ENCODE measurements at regions of chr9 and their contacts with region 1.

Region 1: GRCh38 chr9:6305954-6306563 is 22.1 kb upstream of the TPD52L3 start:
- DNase-seq: no peak
- ATAC-seq: peak in 1 of 4 donors; percentile 67
- H3K4me3 ChIP-seq: no peak overlapping the region
- H3K27ac ChIP-seq: no peak overlapping the region
- H3K4me1 ChIP-seq: no peaks in the 10 kb centered on the region
- H3K27me3 ChIP-seq: peaks cover 0 to 4% (median 0%) of the 10 kb centered on the region in 3 donors
- CTCF ChIP-seq: peak; percentile 52

Region 2: DNA sequence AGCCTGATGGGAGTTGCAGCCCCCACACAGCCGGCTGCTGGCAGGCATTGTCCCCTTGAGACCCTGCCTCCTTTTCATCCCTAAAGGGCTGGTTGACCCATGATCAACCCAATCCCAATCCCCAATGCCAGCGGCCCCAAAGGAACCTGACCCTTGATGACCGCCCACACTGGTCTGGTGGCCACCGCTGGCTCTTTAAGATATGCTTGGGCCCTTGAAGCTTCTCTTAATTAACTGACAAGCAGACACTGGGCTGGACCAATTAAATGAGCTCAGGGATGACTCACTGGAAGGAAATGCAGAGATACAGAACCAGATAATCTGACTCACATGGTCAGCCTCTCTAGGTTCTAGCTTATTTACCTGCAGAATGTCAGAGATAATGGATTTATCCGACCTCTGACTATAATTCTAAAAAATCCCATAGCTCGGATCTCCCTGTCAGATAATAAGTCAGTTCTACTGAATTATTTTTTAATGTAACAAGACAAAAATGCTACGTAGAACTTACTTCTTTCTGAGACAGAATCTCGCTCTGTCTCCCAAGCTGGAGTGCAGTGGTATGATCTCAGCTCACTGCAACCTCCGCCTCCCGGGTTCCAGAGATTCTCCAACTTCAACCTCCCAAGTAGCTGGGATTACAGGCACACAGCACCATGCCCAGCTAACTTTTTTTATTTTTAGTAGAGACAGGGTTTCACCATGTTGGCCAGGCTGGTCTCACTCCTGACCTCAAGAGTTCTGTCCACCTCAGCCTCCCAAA is 426.5 kb before region 1 on chr9:
- intact Hi-C with region 1: loop called (anchors 5 to 10 kb)
- DNase-seq: no peak
- ATAC-seq: peak in 1 of 4 donors; percentile 29
- H3K4me3 ChIP-seq: no peak overlapping the region
- H3K27ac ChIP-seq: no peak overlapping the region
- H3K4me1 ChIP-seq: no peaks in the 10 kb centered on the region
- H3K27me3 ChIP-seq: no peaks in the 10 kb centered on the region
- CTCF ChIP-seq: no peak

Region 3: DNA sequence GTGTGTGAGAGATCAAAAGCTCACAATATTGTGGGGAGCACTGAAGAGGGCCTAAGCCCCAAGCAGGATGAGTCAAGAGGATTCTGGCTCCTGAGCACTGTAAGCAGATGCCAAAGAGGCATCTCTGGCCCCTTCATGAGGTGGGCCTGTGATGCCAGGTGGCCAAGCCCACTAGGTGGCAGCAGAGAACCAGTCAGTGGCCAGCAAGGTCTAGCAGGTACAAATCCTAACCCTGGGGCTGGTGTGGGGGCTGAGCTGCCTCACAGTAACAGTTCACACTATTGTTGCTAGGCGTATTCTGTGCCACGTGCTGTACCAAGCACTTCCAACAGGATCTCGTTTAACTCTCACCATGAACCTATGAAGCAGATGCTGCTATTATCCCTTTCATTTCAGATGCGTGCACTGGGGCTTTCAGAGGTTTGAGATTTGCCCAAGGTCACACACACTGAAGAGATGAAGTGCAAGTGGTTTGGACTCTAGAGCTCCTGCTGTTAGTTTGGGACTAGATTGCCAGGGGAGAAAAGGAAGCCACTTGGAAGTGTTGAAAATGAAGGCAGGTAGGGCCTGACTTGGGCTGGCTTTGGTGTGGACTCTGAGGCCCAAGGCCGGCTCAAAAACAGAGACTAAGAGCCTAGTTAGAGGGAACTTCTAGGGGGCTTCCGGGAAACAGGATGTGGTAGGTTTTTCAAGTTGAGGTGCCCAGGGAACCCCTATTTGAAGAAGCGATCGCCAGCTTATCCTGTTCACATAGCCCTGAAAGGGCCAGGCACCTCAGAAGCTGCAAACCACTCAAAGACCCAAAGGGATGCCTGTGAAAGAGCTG is 419.7 kb before region 1 on chr9:
- intact Hi-C with region 1: loop called (anchors 5 to 10 kb)
- DNase-seq: peak; percentile 64 to 83
- ATAC-seq: peak; percentile 78 to 96 (median 88)
- H3K4me3 ChIP-seq: no peak overlapping the region
- H3K27ac ChIP-seq: no peak overlapping the region
- H3K4me1 ChIP-seq: no peaks in the 10 kb centered on the region
- H3K27me3 ChIP-seq: no peaks in the 10 kb centered on the region
- CTCF ChIP-seq: peak; percentile 88

Region 4: GRCh38 chr9:6049798-6050197 is 256.3 kb before region 1 on chr9:
- intact Hi-C with region 1: loop called in 1 of 2 experiments (anchors 2 kb)
- DNase-seq: no peak
- ATAC-seq: no peak
- H3K4me3 ChIP-seq: no peak overlapping the region
- H3K27ac ChIP-seq: no peak overlapping the region
- H3K4me1 ChIP-seq: no peaks in the 10 kb centered on the region
- H3K27me3 ChIP-seq: peaks cover 0 to 3% (median 2%) of the 10 kb centered on the region in 3 donors
- CTCF ChIP-seq: peak; percentile 23

Region 5: DNA sequence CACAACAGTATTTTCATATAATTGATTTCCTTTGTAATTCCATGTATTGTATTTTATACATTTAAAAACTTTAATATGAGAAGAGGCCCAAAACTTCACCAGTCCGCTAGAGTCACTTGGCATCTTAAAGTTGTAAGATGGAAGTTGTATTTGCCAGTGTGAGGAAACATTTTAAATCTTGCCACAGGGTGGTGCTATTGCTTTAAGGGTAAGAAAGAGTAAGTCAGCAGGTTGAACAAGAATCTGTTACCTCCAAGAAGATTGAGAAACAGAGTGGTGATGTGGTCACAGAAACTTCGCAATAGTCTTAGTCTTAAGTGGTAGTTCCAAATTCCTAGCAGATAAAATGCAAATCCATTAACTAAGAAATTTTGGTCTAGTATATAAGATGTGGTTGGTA is 250.8 kb before region 1 on chr9:
- intact Hi-C with region 1: loop called (anchors 2 to 5 kb)
- DNase-seq: no peak
- ATAC-seq: peak; percentile 81 to 99 (median 88)
- H3K4me3 ChIP-seq: no peak overlapping the region
- H3K27ac ChIP-seq: no peak overlapping the region
- H3K4me1 ChIP-seq: no peaks in the 10 kb centered on the region
- H3K27me3 ChIP-seq: no peaks in the 10 kb centered on the region
- CTCF ChIP-seq: peak; percentile 68

Region 6: GRCh38 chr9:6197330-6197729 is 108.7 kb before region 1 on chr9:
- intact Hi-C with region 1: loop called in 1 of 2 experiments (anchors 2 kb)
- DNase-seq: no peak
- ATAC-seq: peak in 1 of 4 donors; percentile 27
- H3K4me3 ChIP-seq: no peak overlapping the region
- H3K27ac ChIP-seq: no peak overlapping the region
- H3K4me1 ChIP-seq: no peaks in the 10 kb centered on the region
- H3K27me3 ChIP-seq: peaks cover 0 to 2% (median 0%) of the 10 kb centered on the region in 3 donors
- CTCF ChIP-seq: peak; percentile 44

Region 7: GRCh38 chr9:6243746-6244145 is 62.3 kb before region 1 on chr9:
- intact Hi-C with region 1: no loop called
- DNase-seq: no peak
- ATAC-seq: no peak
- H3K4me3 ChIP-seq: no peak overlapping the region
- H3K27ac ChIP-seq: no peak overlapping the region
- H3K4me1 ChIP-seq: no peaks in the 10 kb centered on the region
- H3K27me3 ChIP-seq: peaks cover 0 to 4% (median 0%) of the 10 kb centered on the region in 3 donors
- CTCF ChIP-seq: no peak

Region 8: DNA sequence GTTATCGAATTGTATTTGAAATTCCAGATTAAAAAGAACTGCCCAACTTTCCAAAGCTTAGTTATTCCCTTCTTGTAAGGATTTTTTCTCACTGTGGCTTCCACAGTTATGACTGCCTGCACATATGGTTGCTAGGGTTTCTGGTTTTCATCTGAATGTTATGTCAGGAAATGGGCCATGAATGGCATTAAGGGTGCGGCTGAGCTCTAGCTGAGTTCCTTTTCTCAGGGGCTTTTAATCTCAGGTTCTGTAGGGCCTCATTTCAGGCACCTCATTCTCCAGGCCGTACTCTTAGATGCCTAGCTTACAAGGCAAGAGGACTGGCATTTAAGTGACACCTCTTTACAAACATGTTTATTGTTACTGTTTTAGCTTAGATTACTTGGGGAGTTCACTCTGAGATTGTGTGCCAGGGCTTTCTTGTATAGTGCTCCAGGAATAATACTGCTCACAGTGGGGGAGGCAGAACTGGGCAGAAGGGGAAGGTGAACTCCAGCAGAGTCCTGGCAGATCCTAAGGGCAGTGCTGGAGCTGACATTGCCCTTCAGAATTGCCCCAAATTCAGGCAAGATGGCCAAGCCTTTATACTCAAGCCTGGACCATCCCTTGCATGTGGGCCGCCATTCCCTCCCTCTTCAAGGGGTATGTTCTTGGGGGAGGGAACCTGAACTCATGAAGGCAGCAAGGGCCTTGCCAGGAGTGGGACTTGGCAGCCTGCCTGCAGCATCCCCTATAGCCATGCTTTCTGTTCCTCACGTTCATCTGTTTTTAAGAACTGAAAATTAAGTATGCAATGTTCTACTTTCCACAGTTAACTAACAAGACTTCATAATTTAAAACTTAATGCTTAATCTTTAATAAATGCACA is 563.3 kb after region 1 on chr9:
- intact Hi-C with region 1: no loop called
- DNase-seq: no peak
- ATAC-seq: no peak
- H3K4me3 ChIP-seq: no peak overlapping the region
- H3K27ac ChIP-seq: no peak overlapping the region
- H3K4me1 ChIP-seq: no peaks in the 10 kb centered on the region
- H3K27me3 ChIP-seq: no peaks in the 10 kb centered on the region
- CTCF ChIP-seq: no peak